ENCODE measurements at regions of chr15 and their contacts with region 1.

Region 1: GRCh38 chr15:90642464-90643300 is 74.5 kb upstream of the BLM start:
- DNase-seq: no peak
- ATAC-seq: peak; percentile 78
- H3K4me3 Mint-ChIP-seq: no peak overlapping the region
- H3K27ac Mint-ChIP-seq: peak overlapping the region; percentile 68
- H3K4me1 Mint-ChIP-seq: peaks cover 13% of the 10 kb centered on the region
- H3K27me3 Mint-ChIP-seq: no peaks in the 10 kb centered on the region
- CTCF ChIP-seq: no peak

Region 2: DNA sequence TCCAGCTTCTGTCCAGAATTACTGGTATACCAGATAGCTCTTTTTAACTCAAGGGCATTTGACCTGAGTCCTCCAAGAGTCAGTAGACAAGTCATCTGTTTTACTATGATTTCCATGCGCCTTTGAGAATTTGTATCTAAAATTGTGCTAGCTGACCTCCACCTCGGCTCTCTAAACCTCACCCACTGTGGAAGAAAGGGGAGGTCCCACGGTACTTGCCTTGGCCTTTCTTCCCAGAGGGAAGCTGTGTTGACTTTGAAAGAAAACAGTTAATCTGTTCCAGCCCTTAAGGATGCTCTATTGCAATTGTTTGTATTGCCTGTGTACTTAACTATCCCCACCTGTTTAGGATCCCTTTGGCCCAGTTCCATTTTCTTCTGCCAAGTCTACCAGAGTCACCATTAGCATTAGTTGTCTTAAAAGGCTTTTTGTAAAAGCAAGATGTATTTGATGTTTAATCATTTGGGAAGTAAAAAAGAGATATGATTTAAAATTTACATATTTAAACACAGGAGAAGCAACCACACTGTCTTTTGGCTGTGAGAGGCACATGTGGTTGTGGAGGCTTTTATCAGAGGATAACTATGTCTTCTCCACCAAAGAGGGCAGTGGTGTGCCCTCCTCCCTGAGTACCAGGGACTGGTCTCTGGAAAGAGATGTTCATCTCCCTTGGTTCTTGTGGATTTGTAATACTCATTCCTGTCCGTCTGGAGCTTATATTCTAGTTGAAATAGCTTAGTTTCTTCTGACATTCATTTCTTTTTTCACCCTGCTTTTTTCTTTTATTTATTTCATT is 24.2 kb before region 1 on chr15:
- CTCF ChIA-PET with region 1: interaction called, 12 read pairs
- POLR2A ChIA-PET with region 1: no interaction called
- DNase-seq: no peak
- ATAC-seq: no peak
- H3K4me3 Mint-ChIP-seq: no peak overlapping the region
- H3K27ac Mint-ChIP-seq: no peak overlapping the region
- H3K4me1 Mint-ChIP-seq: peaks cover 11% of the 10 kb centered on the region
- H3K27me3 Mint-ChIP-seq: no peaks in the 10 kb centered on the region
- CTCF ChIP-seq: no peak

Region 3: DNA sequence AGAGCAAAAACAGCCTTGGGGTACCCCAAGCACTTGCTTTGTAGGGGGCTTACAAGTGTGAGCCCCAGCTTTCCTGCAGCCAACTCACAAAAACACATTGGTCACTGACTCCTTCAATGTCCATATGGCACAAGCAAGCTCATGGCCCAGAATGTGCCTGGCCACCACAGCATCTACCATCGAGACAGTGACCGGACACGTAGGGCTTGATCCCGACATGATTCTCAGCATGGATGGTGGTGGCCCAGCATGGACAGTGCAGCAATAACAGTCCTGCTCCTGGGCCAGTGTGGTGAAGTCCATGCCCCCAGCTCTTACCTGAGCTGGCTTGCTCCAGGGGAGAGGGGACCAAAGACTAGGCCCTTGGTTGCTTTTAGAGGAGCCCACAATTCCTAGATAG is 298.4 kb after region 1 on chr15:
- CTCF ChIA-PET with region 1: no interaction called
- POLR2A ChIA-PET with region 1: no interaction called
- DNase-seq: no peak
- ATAC-seq: no peak
- H3K4me3 Mint-ChIP-seq: no peak overlapping the region
- H3K27ac Mint-ChIP-seq: no peak overlapping the region
- H3K4me1 Mint-ChIP-seq: peaks cover 6% of the 10 kb centered on the region
- H3K27me3 Mint-ChIP-seq: no peaks in the 10 kb centered on the region
- CTCF ChIP-seq: no peak

Measured in WTC11 (cell line).